Heart right ventricle (tissue), 16 donors: ENCODE measurements at regions of chr16 and their contacts with region 1.

Region 1: GRCh38 chr16:86575754-86576557 is 2.4 kb upstream of the FOXL1 start:
- DNase-seq: peak; percentile 83 to 86
- ATAC-seq: peak; percentile 80 to 88 (median 85)
- H3K4me3 ChIP-seq: peak overlapping the region; percentile 7 to 59 (median 49)
- H3K27ac ChIP-seq: peak overlapping the region; percentile 43 to 85 (median 71)
- H3K4me1 ChIP-seq: peaks cover 0 to 67% (median 28%) of the 10 kb centered on the region in 9 donors
- H3K27me3 ChIP-seq: peaks cover 7 to 100% (median 97%) of the 10 kb centered on the region in 7 donors
- CTCF ChIP-seq: peak in 8 of 9 donors; percentile 40 to 78 (median 61)

Region 2: DNA sequence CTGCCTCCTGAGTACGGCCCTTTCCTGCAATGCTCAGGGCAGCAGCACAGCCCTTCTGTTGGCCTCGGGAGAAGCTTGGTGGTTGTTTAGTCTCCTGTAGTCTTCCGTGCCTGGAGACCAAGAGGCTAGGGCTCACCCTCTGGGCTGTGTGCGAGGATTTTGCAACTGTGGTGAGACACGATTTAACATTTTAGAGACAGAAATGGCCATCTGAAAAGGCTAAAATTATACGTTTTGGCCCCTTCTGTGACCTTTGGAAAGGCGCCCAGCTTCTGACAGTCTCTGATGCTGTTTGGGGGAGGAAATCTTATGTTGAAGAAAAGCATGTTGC is 35.5 kb after region 1 on chr16:
- intact Hi-C with region 1: loop called in 1 of 10 experiments (anchors 5 kb)
- DNase-seq: peak; percentile 36 to 73
- ATAC-seq: peak; percentile 61 to 81 (median 72)
- H3K4me3 ChIP-seq: no peak overlapping the region
- H3K27ac ChIP-seq: peak overlapping the region in 9 of 10 donors; percentile 32 to 77 (median 67)
- H3K4me1 ChIP-seq: peaks cover 0 to 32% (median 8%) of the 10 kb centered on the region in 9 donors
- H3K27me3 ChIP-seq: peaks cover 0 to 25% (median 9%) of the 10 kb centered on the region in 7 donors
- CTCF ChIP-seq: no peak

Region 3: GRCh38 chr16:86680162-86680561 is 104.2 kb after region 1 on chr16:
- intact Hi-C with region 1: loop called in 2 of 10 experiments (anchors 5 kb)
- DNase-seq: no peak
- ATAC-seq: peak; percentile 35 to 75 (median 63)
- H3K4me3 ChIP-seq: peak overlapping the region in 1 of 10 donors; percentile 9
- H3K27ac ChIP-seq: peak overlapping the region in 9 of 10 donors; percentile 18 to 83 (median 75)
- H3K4me1 ChIP-seq: peaks cover 0 to 35% (median 9%) of the 10 kb centered on the region in 9 donors
- H3K27me3 ChIP-seq: peaks cover 0 to 42% (median 11%) of the 10 kb centered on the region in 7 donors
- CTCF ChIP-seq: no peak

Region 4: GRCh38 chr16:86751076-86752030 is 175.4 kb after region 1 on chr16:
- intact Hi-C with region 1: loop called in 2 of 10 experiments (anchors 5 kb)
- DNase-seq: no peak
- ATAC-seq: no peak
- H3K4me3 ChIP-seq: no peak overlapping the region
- H3K27ac ChIP-seq: peak overlapping the region in 1 of 10 donors; percentile 1
- H3K4me1 ChIP-seq: peaks cover 0 to 15% (median 0%) of the 10 kb centered on the region in 9 donors
- H3K27me3 ChIP-seq: peaks cover 0 to 14% (median 2%) of the 10 kb centered on the region in 7 donors
- CTCF ChIP-seq: no peak

Region 5: GRCh38 chr16:86834451-86835035 is 258.6 kb after region 1 on chr16:
- intact Hi-C with region 1: loop called in 3 of 10 experiments (anchors 10 kb)
- DNase-seq: peak in 1 of 2 donors; percentile 27
- ATAC-seq: peak in 3 of 8 donors; percentile 18 to 42 (median 27)
- H3K4me3 ChIP-seq: no peak overlapping the region
- H3K27ac ChIP-seq: no peak overlapping the region
- H3K4me1 ChIP-seq: peaks cover 0 to 7% (median 4%) of the 10 kb centered on the region in 9 donors
- H3K27me3 ChIP-seq: no peaks in the 10 kb centered on the region
- CTCF ChIP-seq: peak in 5 of 9 donors; percentile 10 to 32 (median 24)